Heart right ventricle (tissue), 16 donors: ENCODE measurements at regions of chr1 and their contacts with region 1.

Region 1: GRCh38 chr1:59096501-59096900 is 200.4 kb upstream of the FGGY start:
- DNase-seq: peak; percentile 29 to 52
- ATAC-seq: peak; percentile 75 to 95 (median 90)
- H3K4me3 ChIP-seq: no peak overlapping the region
- H3K27ac ChIP-seq: peak overlapping the region in 7 of 10 donors; percentile 11 to 59 (median 41)
- H3K4me1 ChIP-seq: peaks cover 0 to 27% (median 9%) of the 10 kb centered on the region in 9 donors
- H3K27me3 ChIP-seq: no peaks in the 10 kb centered on the region
- CTCF ChIP-seq: no peak

Region 2: DNA sequence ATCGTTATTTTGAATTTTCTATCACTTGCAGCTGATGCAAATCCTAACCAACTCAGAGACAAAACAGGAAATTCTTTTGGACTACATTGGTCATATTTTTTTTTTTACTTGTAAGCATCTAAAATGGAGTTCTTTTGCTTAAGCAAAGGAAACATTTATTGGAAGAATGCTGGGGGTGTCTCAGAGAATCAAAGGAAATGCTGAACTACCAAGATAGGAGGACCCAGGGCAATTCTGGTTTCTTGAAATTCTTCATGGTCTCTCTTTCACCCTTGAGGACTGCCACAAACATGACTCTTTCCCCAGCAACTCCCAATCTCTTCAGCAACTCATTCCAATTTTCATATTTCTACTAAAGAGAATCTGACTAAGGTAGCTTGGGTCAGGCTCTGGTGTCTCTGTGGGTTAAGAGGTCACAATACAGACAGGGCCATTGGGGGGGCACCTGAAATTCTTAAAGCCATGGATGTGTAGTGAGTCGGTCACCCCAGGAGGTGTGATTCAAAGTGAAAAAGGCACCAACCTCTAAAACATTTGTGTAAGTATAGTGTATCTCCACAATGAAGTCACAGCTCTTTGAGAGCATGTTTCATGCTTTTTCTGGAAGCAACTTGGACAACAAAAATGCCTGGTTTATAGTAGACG is 29.3 kb after region 1 on chr1:
- intact Hi-C with region 1: loop called in 1 of 10 experiments (anchors 1 kb)
- DNase-seq: no peak
- ATAC-seq: no peak
- H3K4me3 ChIP-seq: no peak overlapping the region
- H3K27ac ChIP-seq: no peak overlapping the region
- H3K4me1 ChIP-seq: peaks cover 0 to 10% (median 0%) of the 10 kb centered on the region in 9 donors
- H3K27me3 ChIP-seq: no peaks in the 10 kb centered on the region
- CTCF ChIP-seq: no peak